Activated CD4-positive, alpha-beta memory T cell treated with anti-CD3 and anti-CD28 coated beads, Interleukin-2, amount 10 ng/mL, durations not matched to agents 7 days and 5 days (primary cell): ENCODE measurements at regions of chr5 and their contacts with region 1.

Region 1: DNA sequence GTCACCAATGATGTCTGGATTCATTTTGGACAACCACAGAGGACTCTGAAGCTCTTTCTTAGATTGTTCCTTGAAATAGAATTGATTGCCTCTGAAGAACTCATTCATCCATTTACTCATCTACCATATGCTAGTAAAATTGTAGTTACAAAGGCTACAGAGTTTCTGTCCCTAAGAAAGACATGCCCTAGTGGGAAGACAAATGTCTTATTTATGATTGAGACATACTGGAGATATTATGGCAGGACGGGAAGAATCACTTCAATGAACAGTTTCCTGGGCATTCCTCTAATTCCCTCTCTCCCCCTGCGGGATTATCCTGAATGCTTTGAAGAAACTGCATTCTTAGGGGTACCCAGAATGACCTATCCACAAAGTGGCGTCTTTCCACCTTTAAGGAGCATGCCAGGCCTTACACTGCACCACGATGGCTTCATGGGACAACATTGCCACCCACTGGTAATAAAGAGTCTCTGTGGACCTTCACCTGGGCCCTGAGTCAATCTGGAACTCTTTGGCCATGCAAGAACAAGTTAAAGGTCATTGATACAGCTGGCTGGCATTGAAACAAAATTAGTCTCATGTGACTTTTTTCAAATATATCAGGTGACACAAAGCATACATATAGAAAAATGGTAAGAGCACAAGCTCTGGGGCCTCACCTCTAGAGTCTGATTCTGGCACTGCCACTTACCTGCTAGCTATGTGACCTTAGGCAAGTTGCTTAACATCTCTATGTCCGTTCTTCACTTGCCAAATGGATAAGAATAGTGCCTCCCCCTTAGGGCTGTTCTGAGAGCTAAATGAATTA is 32.1 kb downstream of the ANKRD55 start:
- DNase-seq: peak; percentile 63
- H3K4me3 Mint-ChIP-seq: no peak overlapping the region
- H3K27ac Mint-ChIP-seq: no peak overlapping the region
- H3K4me1 Mint-ChIP-seq: peaks cover 12% of the 10 kb centered on the region
- H3K27me3 Mint-ChIP-seq: peaks cover 1% of the 10 kb centered on the region

Region 2: GRCh38 chr5:55982957-55983381 is 218.1 kb before region 1 on chr5:
- CTCF ChIA-PET with region 1: interaction called, 86 read pairs
- POLR2A ChIA-PET with region 1: interaction called, 5 read pairs
- DNase-seq: no peak
- H3K4me3 Mint-ChIP-seq: no peak overlapping the region
- H3K27ac Mint-ChIP-seq: no peak overlapping the region
- H3K4me1 Mint-ChIP-seq: peaks cover 54% of the 10 kb centered on the region
- H3K27me3 Mint-ChIP-seq: no peaks in the 10 kb centered on the region